AG04450 (cell line): ENCODE measurements at regions of chr1 and their contacts with region 1.

Region 1: DNA sequence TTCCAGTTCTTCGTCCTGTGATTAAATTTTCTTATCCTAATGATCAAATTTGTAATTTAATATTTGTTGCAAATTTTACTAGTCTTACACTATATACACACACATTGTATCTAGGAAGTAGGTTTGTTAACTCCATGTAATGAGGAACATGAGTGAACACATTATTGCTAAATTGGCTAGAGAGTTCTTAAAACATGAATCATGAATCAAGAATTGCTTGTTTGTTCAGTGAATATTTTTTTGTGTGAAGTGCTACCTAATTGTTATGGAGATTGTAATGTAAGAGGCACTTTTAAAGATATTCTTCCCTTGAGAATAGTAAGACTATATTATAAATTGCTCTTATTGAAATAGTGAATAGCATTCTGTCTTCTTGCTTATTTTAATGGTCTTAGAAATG is 4.6 kb downstream of the GPSM2 start:
- DNase-seq: no peak
- H3K4me3 ChIP-seq: no peak overlapping the region
- H3K27ac ChIP-seq: no peak overlapping the region
- H3K27me3 ChIP-seq: no peaks in the 10 kb centered on the region
- CTCF ChIP-seq: no peak

Region 2: DNA sequence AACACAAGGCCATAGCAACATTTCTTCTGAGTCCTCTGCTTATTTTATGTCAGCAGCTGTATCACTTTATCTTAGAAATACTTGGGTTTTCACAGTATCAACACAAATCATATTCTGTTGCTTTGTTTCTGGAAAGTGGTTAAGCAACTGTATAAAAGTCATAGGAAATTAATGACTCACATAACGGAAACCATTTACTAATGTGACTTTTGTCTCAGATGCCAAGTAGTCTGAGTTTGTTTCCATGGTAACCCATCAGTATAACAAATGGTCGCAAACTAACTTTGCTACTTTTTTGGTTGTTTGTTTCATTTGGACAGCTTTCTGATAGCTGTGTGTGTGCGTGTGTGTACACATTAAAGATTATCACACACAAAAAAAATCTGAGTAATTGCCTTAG is 290.4 kb before region 1 on chr1:
- CTCF ChIA-PET with region 1: no interaction called
- POLR2A ChIA-PET with region 1: no interaction called
- DNase-seq: peak; percentile 80
- H3K4me3 ChIP-seq: no peak overlapping the region
- H3K27ac ChIP-seq: no peak overlapping the region
- H3K27me3 ChIP-seq: no peaks in the 10 kb centered on the region
- CTCF ChIP-seq: no peak

Region 3: DNA sequence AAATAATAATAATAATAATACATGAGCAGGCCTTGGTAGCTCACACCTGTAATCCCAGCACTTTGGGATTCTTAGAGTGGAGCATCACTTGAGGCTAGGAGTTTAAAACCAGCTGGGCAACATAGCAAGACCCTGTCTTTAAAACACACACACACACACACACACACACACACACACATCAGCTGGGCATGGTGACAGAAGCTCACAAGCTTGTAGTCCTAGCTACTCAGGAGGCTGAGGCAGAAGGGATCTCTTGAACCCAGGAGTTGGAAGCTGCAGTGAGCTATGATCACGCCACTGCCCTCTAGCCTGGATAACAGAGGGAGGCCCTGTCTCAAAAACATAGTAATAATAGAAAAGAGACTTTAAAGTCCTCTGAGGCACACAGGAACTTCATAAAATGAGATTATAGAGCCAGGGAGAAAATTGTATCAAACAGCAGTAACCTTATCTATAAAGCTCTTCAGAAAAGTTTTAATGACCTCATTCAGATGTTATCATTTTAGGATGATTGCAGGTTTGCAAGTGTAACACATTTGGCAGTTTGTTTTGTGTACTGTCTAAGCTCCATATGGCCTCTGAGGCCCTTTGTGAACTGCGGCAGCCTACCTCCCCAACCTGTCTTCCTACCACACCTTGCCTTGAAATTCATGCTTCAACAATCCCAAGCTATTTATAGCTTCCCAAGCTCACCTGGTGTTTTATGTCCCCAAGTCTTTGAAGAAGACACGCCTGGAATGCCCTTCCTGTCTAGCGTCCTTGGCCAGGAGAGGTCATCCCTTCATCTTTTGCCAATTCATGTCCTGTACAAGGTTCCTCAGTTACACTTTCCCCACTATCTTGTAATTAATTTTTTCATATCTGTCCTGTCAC is 16.1 kb before region 1 on chr1:
- CTCF ChIA-PET with region 1: interaction called, 3 read pairs
- POLR2A ChIA-PET with region 1: interaction called, 11 read pairs
- DNase-seq: no peak
- H3K4me3 ChIP-seq: no peak overlapping the region
- H3K27ac ChIP-seq: no peak overlapping the region
- H3K27me3 ChIP-seq: peaks cover 2% of the 10 kb centered on the region
- CTCF ChIP-seq: no peak